Mammary epithelial cell (primary cell): ENCODE measurements at regions of chr5 and their contacts with region 1.

Region 1: GRCh38 chr5:177446200-177447065 is at the start of gene PRR7:
- DNase-seq: peak; percentile 60
- H3K4me3 ChIP-seq: peak within 1 kb of the TSS; percentile 19 to 67 (median 56)
- H3K27ac ChIP-seq: peak within 1 kb of the TSS; percentile 69
- H3K4me1 ChIP-seq: peaks cover 28% of the 10 kb centered on the region
- H3K27me3 ChIP-seq: no peaks in the 10 kb centered on the region
- CTCF ChIP-seq: no peak
- total RNA-seq, gene PRR7: 13.9 to 23.3 TPM

Region 2: GRCh38 chr5:176965633-176966032 is 480.8 kb before region 1 on chr5:
- CTCF ChIA-PET with region 1: no interaction called
- dilution Hi-C with region 1: no loop called
- in situ Hi-C with region 1: no loop called
- intact Hi-C with region 1: no loop called
- DNase-seq: no peak
- H3K4me3 ChIP-seq: no peak overlapping the region
- H3K27ac ChIP-seq: no peak overlapping the region
- H3K4me1 ChIP-seq: no peaks in the 10 kb centered on the region
- H3K27me3 ChIP-seq: no peaks in the 10 kb centered on the region
- CTCF ChIP-seq: no peak

Region 3: DNA sequence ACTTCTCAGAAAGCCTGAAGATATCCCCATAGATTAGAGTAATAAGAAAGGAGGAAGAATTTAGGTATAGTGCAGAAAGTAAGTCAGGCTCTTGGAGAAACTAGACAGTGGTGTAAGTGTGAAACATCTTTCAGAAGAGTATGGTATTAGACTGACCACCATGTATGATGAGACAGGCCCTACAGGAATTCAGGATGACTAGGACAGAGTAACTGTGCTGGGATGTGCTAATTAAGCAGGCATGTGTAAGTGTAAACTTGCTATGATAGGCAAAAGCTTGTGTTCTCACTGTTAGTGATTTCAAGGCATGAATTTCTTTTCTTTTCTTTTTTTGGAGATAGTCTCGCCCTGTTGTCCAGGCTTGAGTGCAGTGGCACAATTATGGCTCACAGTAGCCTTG is 213.7 kb before region 1 on chr5:
- CTCF ChIA-PET with region 1: no interaction called
- dilution Hi-C with region 1: loop called (anchors 10 kb)
- in situ Hi-C with region 1: no loop called
- intact Hi-C with region 1: no loop called
- DNase-seq: peak; percentile 33
- H3K4me3 ChIP-seq: no peak overlapping the region
- H3K27ac ChIP-seq: no peak overlapping the region
- H3K4me1 ChIP-seq: peaks cover 12% of the 10 kb centered on the region
- H3K27me3 ChIP-seq: no peaks in the 10 kb centered on the region
- CTCF ChIP-seq: no peak

Region 4: DNA sequence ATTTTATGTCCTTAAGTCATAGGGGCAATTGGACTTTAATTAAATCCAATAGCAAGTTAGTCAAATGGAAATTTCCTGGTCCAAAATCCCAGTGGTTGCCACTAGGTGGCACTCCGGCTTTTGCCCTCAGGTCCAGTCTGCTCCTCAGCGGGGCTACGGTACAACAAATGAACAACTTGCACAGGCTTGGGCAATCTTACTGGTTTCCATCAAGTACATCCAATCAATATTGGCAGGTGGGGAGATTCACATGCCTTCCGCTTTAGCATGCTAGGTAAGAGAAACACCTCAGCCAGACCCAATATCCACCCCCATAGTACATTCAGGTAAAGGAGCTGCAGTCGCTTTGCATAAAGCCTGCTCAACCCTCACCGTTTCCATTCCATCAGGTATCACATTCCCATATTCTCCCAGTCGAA is 128.5 kb before region 1 on chr5:
- CTCF ChIA-PET with region 1: no interaction called
- dilution Hi-C with region 1: loop called (anchors 5 kb)
- in situ Hi-C with region 1: loop called in 1 of 2 experiments (anchors 10 kb)
- intact Hi-C with region 1: no loop called
- DNase-seq: peak; percentile 61
- H3K4me3 ChIP-seq: no peak overlapping the region
- H3K27ac ChIP-seq: no peak overlapping the region
- H3K4me1 ChIP-seq: peaks cover 2% of the 10 kb centered on the region
- H3K27me3 ChIP-seq: no peaks in the 10 kb centered on the region
- CTCF ChIP-seq: peak; percentile 88

Region 5: GRCh38 chr5:177397875-177398390 is 48.5 kb before region 1 on chr5:
- CTCF ChIA-PET with region 1: no interaction called
- dilution Hi-C with region 1: no loop called
- in situ Hi-C with region 1: no loop called
- intact Hi-C with region 1: no loop called
- DNase-seq: no peak
- H3K4me3 ChIP-seq: no peak overlapping the region
- H3K27ac ChIP-seq: no peak overlapping the region
- H3K4me1 ChIP-seq: peaks cover 9% of the 10 kb centered on the region
- H3K27me3 ChIP-seq: no peaks in the 10 kb centered on the region
- CTCF ChIP-seq: no peak

Region 6: GRCh38 chr5:177425801-177426565 is 20.4 kb before region 1 on chr5:
- CTCF ChIA-PET with region 1: no interaction called
- dilution Hi-C with region 1: no loop called
- in situ Hi-C with region 1: no loop called
- intact Hi-C with region 1: loop called (anchors 1 kb)
- DNase-seq: peak; percentile 100
- H3K4me3 ChIP-seq: peak overlapping the region; percentile 51 to 68 (median 54)
- H3K27ac ChIP-seq: peak overlapping the region; percentile 71
- H3K4me1 ChIP-seq: peaks cover 31% of the 10 kb centered on the region
- H3K27me3 ChIP-seq: no peaks in the 10 kb centered on the region
- CTCF ChIP-seq: no peak

Region 7: DNA sequence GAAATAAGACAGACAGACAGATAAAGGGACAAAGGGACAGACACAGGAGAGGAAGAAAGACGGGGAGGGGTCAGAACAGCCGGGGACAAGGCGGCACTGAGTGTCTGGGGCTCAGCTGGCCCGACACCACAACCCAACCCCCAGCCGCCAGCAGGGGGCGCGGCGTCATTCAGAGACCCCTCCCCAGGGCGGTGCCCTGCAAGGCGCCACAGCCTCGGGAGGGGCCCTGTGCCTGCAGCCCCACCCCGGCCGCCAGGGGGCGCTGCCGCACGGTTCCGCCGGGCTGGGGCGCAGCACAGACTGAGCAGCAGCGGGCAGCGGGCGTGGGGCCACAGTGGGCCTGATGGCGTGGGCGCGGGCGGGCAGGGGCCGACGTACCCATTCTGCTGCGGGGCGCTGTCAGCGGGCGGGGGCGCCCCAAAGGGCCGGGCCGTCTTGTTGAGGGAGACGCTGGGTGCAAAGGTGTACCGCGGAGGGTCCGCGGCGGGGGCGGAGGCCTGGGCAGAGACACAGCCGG is 45.1 kb after region 1 on chr5:
- CTCF ChIA-PET with region 1: no interaction called
- dilution Hi-C with region 1: loop called (anchors 5 kb)
- in situ Hi-C with region 1: no loop called
- intact Hi-C with region 1: no loop called
- DNase-seq: peak; percentile 44
- H3K4me3 ChIP-seq: no peak overlapping the region
- H3K27ac ChIP-seq: no peak overlapping the region
- H3K4me1 ChIP-seq: peaks cover 46% of the 10 kb centered on the region
- H3K27me3 ChIP-seq: no peaks in the 10 kb centered on the region
- CTCF ChIP-seq: peak; percentile 67 to 74

Region 8: GRCh38 chr5:177516604-177517568 is 70.5 kb after region 1 on chr5 and contains the start of gene DDX41:
- CTCF ChIA-PET with region 1: no interaction called
- dilution Hi-C with region 1: loop called (anchors 5 kb)
- in situ Hi-C with region 1: no loop called
- intact Hi-C with region 1: no loop called
- DNase-seq: peak; percentile 99
- H3K4me3 ChIP-seq: peak within 1 kb of the TSS; percentile 57 to 100 (median 86)
- H3K27ac ChIP-seq: peak within 1 kb of the TSS; percentile 54
- H3K4me1 ChIP-seq: peaks cover 14% of the 10 kb centered on the region
- H3K27me3 ChIP-seq: no peaks in the 10 kb centered on the region
- CTCF ChIP-seq: peak in 1 of 2 donors; percentile 20
- total RNA-seq, gene DDX41: 60.7 to 80.6 TPM

Region 9: GRCh38 chr5:177967221-177967887 is 520.9 kb after region 1 on chr5:
- CTCF ChIA-PET with region 1: interaction called, 10 read pairs
- dilution Hi-C with region 1: no loop called
- in situ Hi-C with region 1: no loop called
- intact Hi-C with region 1: no loop called
- DNase-seq: no peak
- H3K4me3 ChIP-seq: no peak overlapping the region
- H3K27ac ChIP-seq: no peak overlapping the region
- H3K4me1 ChIP-seq: no peaks in the 10 kb centered on the region
- H3K27me3 ChIP-seq: no peaks in the 10 kb centered on the region
- CTCF ChIP-seq: no peak